ENCODE measurements at regions of chr12 and their contacts with region 1.

Region 1: DNA sequence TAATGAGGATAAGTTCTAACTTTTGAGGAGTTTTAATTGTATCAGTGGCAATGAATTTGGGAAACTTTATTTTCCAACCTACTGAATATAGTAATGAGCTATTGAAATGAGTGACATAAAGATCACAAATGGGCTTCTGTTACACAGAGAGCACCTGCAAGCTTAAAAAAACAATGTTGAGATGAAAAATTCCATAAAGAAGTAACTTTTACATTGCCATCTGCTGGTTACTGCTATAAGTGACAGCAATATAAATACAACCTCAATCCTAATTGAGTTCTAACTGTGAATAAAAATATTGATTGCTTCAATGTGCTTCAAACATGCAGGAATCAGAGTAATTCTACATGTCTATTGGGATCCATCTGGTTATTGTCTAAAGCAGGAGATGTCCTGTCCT is 14.2 kb downstream of the WIF1 start:
- DNase-seq: no peak
- ATAC-seq: no peak
- H3K4me3 Mint-ChIP-seq: no peak overlapping the region
- H3K27ac Mint-ChIP-seq: no peak overlapping the region
- H3K4me1 Mint-ChIP-seq: no peaks in the 10 kb centered on the region
- H3K27me3 Mint-ChIP-seq: peaks cover 8% of the 10 kb centered on the region

Region 2: GRCh38 chr12:64968989-64969735 is 137.8 kb before region 1 on chr12:
- CTCF ChIA-PET with region 1: no interaction called
- DNase-seq: no peak
- ATAC-seq: no peak
- H3K4me3 Mint-ChIP-seq: no peak overlapping the region
- H3K27ac Mint-ChIP-seq: no peak overlapping the region
- H3K4me1 Mint-ChIP-seq: no peaks in the 10 kb centered on the region
- H3K27me3 Mint-ChIP-seq: peaks cover 18% of the 10 kb centered on the region

Region 3: GRCh38 chr12:65123435-65124063 is 16.6 kb after region 1 on chr12:
- CTCF ChIA-PET with region 1: interaction called, 13 read pairs
- DNase-seq: no peak
- ATAC-seq: no peak
- H3K4me3 Mint-ChIP-seq: no peak overlapping the region
- H3K27ac Mint-ChIP-seq: no peak overlapping the region
- H3K4me1 Mint-ChIP-seq: peaks cover 12% of the 10 kb centered on the region
- H3K27me3 Mint-ChIP-seq: peaks cover 42% of the 10 kb centered on the region

Measured in activated CD8-positive, alpha-beta memory T cell treated with anti-CD3 and anti-CD28 coated beads, Interleukin-2, amount 10 ng/mL, durations not matched to agents 7 days and 5 days (primary cell).